Ascending aorta (tissue), 2 donors: ENCODE measurements at regions of chr10 and their contacts with region 1.

Region 1: GRCh38 chr10:86970162-86970981 is 2.1 kb downstream of the ADIRF start:
- DNase-seq: peak in 1 of 2 donors; percentile 93
- H3K4me3 ChIP-seq: peak overlapping the region; percentile 68 to 79
- H3K27ac ChIP-seq: peak overlapping the region; percentile 99 to 100
- H3K4me1 ChIP-seq: peaks cover 16 to 39% of the 10 kb centered on the region in 2 donors
- H3K27me3 ChIP-seq: no peaks in the 10 kb centered on the region
- CTCF ChIP-seq: no peak

Region 2: DNA sequence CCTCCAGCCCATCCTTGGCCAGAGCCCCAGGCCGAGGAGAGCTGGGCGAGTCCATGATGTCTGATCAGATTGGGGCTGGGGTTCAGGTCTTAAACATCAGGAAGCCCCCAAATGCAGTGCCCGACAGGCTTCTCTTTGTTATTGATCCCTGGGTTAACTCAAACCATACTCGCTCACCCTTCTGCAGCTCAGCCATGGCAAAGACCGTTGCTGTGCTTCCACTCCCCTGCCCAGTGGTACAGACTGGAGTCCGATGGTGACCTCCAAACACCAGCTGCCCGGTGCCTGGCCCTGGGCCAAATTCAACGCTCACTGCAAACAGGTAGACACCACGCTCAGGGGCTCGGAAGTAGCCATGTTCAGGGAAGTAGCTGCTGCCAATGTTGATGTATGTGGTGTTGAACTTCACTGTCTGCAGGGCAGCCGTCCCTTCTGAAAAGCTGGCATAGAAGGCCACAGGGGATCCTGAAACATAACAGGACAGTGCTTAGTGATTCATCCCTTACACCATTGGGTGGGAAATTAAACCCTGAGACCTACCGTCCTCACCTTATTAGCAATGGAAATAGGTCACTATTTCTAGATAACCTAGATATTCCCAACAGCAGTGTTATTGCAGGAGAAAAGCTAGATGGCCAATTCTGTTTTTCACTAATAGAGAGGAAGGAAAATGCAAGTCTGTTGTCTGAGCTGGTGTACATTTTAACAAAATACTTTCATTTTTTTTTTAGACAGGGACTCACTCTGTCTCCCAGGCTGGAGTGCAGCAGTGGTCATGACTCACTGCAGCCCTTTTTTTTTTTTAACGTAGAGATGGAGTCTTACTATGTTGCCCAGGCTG is 33.5 kb before region 1 on chr10:
- intact Hi-C with region 1: loop called (anchors 1 kb)
- DNase-seq: peak in 1 of 2 donors; percentile 66
- H3K4me3 ChIP-seq: no peak overlapping the region
- H3K27ac ChIP-seq: peak overlapping the region; percentile 49 to 50
- H3K4me1 ChIP-seq: peaks cover 0 to 10% of the 10 kb centered on the region in 2 donors
- H3K27me3 ChIP-seq: no peaks in the 10 kb centered on the region
- CTCF ChIP-seq: no peak